Thyroid gland (tissue), 4 donors: ENCODE measurements at regions of chr11 and their contacts with region 1.

Region 1: DNA sequence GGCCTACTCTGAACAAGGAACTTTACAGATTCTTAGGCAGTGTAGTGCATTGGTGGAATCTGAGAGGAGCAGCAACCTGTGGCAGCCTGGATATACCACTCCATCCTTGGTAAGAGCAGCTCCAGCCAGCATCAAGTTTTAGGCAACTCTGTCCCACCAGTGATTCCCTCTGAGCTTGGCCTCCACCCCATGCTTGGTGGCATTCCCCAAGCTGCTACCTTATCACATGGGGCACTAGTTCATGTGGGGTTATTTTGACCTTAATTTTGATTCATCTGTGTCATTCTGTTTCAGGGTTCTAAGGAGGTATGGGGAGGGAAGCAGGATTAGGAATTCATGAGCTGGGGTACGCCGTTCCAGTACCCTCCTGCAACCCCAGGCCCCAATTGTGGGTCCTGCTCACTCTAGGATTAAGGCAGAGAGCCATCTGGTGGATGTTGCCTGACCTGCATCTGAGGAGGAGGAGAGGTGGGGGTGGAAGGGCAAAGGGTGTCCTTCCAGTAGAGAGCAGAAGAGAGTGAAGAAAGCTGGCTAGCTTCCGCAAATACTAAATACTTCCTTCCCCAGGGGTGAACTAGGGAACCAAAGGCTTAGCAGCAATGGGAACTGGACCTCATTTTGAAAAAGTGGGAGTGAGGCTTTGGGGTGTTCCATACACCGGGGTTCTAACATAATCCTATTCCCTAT is 10.5 kb downstream of the LRRC51 start:
- DNase-seq: peak; percentile 77 to 78
- H3K4me3 ChIP-seq: no peak overlapping the region
- H3K27ac ChIP-seq: peak overlapping the region; percentile 47 to 59 (median 51)
- H3K4me1 ChIP-seq: peaks cover 25 to 30% of the 10 kb centered on the region in 2 donors
- H3K27me3 ChIP-seq: no peaks in the 10 kb centered on the region
- CTCF ChIP-seq: peak; percentile 47 to 97 (median 86)
- POLR2A ChIP-seq: no peak

Region 2: GRCh38 chr11:72024069-72024754 is 66.9 kb before region 1 on chr11:
- intact Hi-C with region 1: loop called (anchors 2 kb)
- DNase-seq: no peak
- H3K4me3 ChIP-seq: no peak overlapping the region
- H3K27ac ChIP-seq: peak overlapping the region in 1 of 3 donors; percentile 5
- H3K4me1 ChIP-seq: peaks cover 15 to 30% of the 10 kb centered on the region in 2 donors
- H3K27me3 ChIP-seq: no peaks in the 10 kb centered on the region
- CTCF ChIP-seq: no peak
- POLR2A ChIP-seq: no peak